GM10248 (cell line): ENCODE measurements at regions of chr17 and their contacts with region 1.

Region 1: DNA sequence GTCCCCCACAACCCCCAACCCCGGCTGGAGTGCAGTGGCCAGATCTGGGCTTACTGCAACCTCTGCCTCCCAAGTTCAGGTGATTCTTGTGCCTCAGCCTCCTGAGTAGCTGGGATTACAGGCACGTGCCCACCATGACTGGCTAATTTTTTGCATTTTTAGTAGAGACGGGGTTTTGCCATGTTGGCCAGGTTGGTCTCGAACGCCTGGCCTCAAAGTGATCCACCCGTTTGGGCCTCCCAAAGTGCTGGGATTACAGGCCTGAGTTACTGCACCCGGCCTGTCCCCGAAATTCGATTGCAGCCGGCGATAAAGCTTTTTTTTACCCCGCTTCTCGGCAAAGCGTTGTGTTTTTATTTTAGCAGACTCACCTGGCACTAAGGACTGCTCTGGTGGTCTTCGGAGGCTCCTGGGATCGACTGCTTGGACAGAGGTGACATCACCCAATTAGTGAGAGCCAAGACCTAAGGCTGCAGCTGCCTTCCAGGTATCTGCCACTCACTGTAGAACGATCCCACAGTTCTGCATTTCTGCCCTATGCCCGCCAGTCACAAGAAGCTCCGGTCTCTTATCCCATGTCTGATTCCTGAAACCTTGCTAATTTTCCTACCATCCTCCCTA is 82.2 kb upstream of the ARL4D start:
- DNase-seq: no peak
- CTCF ChIP-seq: no peak

Region 2: GRCh38 chr17:42798383-42799380 is 518.0 kb before region 1 on chr17 and contains the starts of genes CNTD1 and COA3:
- CTCF ChIA-PET with region 1: no interaction called
- POLR2A ChIA-PET with region 1: interaction called, 11 read pairs
- DNase-seq: peak; percentile 94
- CTCF ChIP-seq: no peak

Region 3: GRCh38 chr17:43024407-43025289 is 292.0 kb before region 1 on chr17 and contains the start of gene RND2:
- CTCF ChIA-PET with region 1: no interaction called
- POLR2A ChIA-PET with region 1: interaction called, 16 read pairs
- DNase-seq: peak; percentile 89
- CTCF ChIP-seq: peak; percentile 63

Region 4: DNA sequence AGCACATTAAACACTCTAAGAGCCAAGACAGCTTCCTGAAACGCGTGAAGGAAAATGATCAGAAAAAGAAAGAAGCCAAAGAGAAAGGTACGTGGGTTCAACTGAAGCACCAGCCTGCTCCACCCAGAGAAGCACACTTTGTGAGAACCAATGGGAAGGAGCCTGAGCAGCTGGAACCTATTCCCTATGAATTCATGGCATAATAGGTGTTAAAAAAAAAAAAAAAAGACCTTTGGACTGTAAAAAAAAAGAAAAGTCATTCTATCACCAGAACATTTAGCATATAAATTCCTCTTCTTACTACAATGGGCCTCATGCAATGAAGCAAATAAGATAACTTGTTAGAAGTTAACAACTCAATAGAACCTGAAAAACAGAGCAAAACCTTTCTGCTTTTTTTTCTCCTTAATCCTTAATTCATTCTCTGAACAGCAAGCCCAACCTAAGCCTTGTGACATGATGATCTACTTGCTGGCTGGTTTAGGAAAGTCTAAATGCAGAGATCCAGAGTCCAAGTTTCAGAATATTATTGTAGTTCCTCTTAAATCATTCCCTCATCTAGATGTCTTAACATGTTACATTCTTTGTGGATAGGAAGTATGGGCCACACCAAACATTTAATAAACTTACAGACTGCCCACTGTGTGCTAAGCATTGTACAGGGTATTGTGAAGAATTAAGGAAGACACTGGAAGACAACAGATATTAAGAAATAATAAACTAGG is 236.9 kb before region 1 on chr17:
- CTCF ChIA-PET with region 1: no interaction called
- POLR2A ChIA-PET with region 1: no interaction called
- DNase-seq: no peak
- CTCF ChIP-seq: no peak

Region 5: GRCh38 chr17:43217614-43218087 is 99.0 kb before region 1 on chr17:
- CTCF ChIA-PET with region 1: interaction called, 5 read pairs
- POLR2A ChIA-PET with region 1: interaction called, 54 read pairs
- DNase-seq: no peak
- CTCF ChIP-seq: no peak

Region 6: GRCh38 chr17:43360739-43361505 is 44.3 kb after region 1 on chr17:
- CTCF ChIA-PET with region 1: no interaction called
- POLR2A ChIA-PET with region 1: interaction called, 50 read pairs
- DNase-seq: peak; percentile 84
- CTCF ChIP-seq: no peak

Region 7: DNA sequence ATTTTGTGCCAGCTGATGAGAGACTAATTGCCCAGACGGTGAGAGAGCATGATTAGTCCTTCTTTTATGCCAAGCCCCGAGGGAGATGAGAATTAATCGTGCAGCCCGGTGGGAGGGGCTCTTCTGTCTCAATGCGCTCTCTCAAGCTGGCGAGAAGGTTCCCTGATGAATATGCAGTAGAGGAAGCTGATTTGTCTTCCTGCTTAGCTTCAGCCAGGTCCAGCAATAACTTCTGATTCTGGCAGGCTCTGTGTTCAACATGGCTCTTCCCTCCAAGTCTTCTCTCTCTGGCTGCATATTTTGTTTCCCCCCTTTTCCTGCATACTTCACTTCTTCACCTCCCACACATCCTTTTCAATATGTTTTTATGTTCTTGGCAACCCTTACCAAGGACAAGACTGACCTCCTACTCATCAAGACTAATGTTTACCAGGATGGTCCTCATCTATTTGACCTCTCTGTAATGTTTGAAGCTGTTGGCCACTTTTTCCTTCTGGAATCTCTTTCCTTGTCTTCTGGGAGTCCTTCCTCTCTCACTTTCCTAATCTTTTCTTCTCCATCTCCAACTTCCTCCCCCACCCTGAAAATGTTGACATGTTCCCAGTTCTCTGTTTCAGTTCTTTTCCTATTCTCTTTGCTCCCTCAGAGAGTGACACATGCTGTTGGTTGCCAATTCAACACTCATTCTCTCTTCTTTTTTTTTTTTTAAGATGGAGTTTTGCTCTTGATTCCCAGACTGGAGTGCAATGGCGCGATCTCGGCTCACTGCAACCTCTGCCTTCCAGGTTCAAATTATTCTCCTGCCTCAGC is 115.3 kb after region 1 on chr17:
- CTCF ChIA-PET with region 1: no interaction called
- POLR2A ChIA-PET with region 1: interaction called, 12 read pairs
- DNase-seq: no peak
- CTCF ChIP-seq: no peak

Region 8: GRCh38 chr17:43778337-43779144 is 461.9 kb after region 1 on chr17 and contains the start of gene DUSP3:
- CTCF ChIA-PET with region 1: no interaction called
- POLR2A ChIA-PET with region 1: no interaction called
- DNase-seq: peak; percentile 95
- CTCF ChIP-seq: no peak